Calu3 (cell line): ENCODE measurements at regions of chr1 and their contacts with region 1.

Region 1: DNA sequence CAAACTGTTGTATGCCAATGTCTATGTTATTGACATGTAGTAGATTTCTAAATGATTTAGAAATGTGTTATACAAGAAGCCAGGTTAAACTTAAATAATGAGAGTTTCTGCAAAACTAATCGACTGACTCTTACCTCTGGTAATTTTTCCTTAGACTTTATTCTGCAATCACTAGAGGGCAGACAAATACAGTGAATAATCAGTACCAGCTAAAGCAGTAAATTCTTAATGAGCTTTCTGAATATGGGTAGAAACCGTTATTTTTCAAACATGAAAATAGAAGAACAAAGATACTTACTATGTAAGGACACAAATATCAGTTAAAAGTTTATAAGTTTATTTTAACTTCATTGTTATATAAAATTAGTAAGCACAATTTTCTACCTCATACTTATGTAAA is 97.9 kb upstream of the RGS1 start:
- DNase-seq: no peak
- H3K4me3 Mint-ChIP-seq: no peak overlapping the region
- H3K27ac Mint-ChIP-seq: no peak overlapping the region
- H3K4me1 Mint-ChIP-seq: peaks cover 8% of the 10 kb centered on the region
- H3K27me3 Mint-ChIP-seq: no peaks in the 10 kb centered on the region
- CTCF ChIP-seq: peak; percentile 20

Region 2: GRCh38 chr1:192580351-192580962 is 102.8 kb after region 1 on chr1:
- CTCF ChIA-PET with region 1: interaction called, 5 read pairs
- intact Hi-C with region 1: loop called (anchors 1 kb)
- DNase-seq: peak; percentile 42
- H3K4me3 Mint-ChIP-seq: no peak overlapping the region
- H3K27ac Mint-ChIP-seq: no peak overlapping the region
- H3K4me1 Mint-ChIP-seq: no peaks in the 10 kb centered on the region
- H3K27me3 Mint-ChIP-seq: no peaks in the 10 kb centered on the region
- CTCF ChIP-seq: no peak

Region 3: DNA sequence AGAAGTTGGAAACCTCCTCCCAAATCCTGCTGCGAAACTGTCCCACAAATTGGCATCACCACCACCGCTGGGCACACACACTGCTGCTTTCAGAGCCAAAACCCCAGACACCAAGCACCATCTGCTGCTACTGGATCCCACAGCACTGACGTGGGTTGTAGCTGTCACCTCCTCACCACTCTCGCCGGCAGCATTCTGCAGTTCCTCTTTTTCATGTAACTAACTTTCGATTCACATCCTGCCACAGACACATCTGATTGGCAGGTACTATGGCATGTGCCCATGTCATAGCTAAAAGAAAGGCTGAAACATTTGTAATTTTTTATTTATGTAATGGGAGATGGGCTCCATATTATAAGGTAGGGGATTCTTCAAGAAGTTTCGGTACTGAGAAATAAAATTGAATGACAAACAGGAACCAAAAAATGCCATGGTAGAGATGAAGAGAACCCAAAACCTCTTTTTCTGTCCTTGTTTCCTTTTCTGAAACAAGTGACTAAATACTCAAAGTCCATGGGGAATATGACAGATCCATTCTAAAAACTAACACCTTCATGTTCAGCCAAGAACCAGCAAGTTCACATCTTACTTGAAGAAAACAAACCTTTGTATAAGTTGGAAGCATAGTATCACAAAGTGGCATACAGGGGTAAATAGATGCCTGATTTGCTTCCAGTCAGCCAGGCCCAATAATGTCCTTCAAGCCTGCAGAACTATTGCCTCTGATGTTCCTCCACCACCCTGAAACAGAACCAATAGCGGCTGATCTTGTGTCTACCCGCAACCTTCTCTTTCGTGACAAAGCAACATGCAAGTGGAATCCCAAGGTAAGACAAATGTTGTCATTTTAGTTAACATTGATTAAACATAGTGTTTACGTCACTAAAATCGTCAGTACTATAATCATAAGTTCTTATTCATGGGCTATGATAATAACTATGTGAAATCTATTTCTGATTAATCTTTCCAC is 131.8 kb after region 1 on chr1:
- CTCF ChIA-PET with region 1: interaction called, 7 read pairs
- intact Hi-C with region 1: loop called (anchors 1 kb)
- DNase-seq: no peak
- H3K4me3 Mint-ChIP-seq: no peak overlapping the region
- H3K27ac Mint-ChIP-seq: no peak overlapping the region
- H3K4me1 Mint-ChIP-seq: peaks cover 9% of the 10 kb centered on the region
- H3K27me3 Mint-ChIP-seq: no peaks in the 10 kb centered on the region
- CTCF ChIP-seq: no peak

Region 4: DNA sequence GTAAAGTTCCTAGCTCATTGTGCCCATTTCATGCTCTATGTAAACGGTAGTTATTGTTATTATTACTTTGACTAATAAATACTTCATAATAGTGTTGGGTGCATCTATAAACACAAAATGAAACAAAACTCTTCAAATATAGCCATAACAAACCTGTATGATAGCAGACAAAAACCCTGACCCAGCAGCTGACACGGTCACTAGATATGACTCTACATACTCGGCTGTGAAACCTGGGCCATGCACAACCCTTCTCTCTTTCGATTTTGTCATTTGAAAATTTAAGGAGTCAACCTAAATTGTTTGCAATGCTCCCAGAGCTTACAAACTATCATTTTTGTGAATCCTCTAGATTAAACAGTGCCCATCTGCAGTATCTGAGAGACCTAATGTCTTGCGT is 150.3 kb after region 1 on chr1:
- CTCF ChIA-PET with region 1: no interaction called
- intact Hi-C with region 1: no loop called
- DNase-seq: no peak
- H3K4me3 Mint-ChIP-seq: no peak overlapping the region
- H3K27ac Mint-ChIP-seq: no peak overlapping the region
- H3K4me1 Mint-ChIP-seq: peaks cover 40% of the 10 kb centered on the region
- H3K27me3 Mint-ChIP-seq: no peaks in the 10 kb centered on the region
- CTCF ChIP-seq: no peak

Region 5: DNA sequence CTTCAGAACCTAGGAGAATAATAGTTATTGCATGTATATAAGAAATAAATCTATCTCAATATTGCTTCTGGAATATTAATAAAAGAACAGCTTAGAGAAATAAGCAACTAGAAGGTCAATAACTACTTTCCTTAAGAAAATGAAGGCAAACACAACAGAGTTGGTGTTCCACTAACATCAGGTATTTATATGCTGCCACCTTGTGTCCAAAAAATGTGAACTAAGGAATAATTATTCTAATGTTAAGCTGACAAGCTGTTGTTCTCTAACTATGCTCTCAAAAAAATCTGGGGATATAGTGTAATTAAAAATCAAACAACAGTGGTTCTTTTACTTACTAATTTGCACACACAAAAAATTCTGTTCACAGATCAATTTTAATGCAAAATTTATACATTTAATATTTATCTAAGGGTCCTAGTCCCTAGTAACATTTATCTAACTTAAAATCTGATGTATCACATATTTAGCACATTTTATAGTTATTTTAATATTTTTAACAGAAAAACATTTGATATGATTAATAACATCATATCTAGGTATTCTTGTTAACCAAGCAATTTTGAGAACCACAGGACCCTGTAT is 541.9 kb after region 1 on chr1:
- CTCF ChIA-PET with region 1: interaction called, 12 read pairs
- intact Hi-C with region 1: loop called (anchors 1 kb)
- DNase-seq: peak; percentile 27
- H3K4me3 Mint-ChIP-seq: no peak overlapping the region
- H3K27ac Mint-ChIP-seq: no peak overlapping the region
- H3K4me1 Mint-ChIP-seq: no peaks in the 10 kb centered on the region
- H3K27me3 Mint-ChIP-seq: no peaks in the 10 kb centered on the region
- CTCF ChIP-seq: peak; percentile 58

Region 6: GRCh38 chr1:193121616-193122593 is 644.3 kb after region 1 on chr1 and contains the start of gene CDC73:
- CTCF ChIA-PET with region 1: interaction called, 3 read pairs
- intact Hi-C with region 1: loop called (anchors 5 kb)
- DNase-seq: peak; percentile 100
- H3K4me3 Mint-ChIP-seq: peak within 1 kb of the TSS; percentile 80
- H3K27ac Mint-ChIP-seq: peak within 1 kb of the TSS; percentile 84
- H3K4me1 Mint-ChIP-seq: peaks cover 25% of the 10 kb centered on the region
- H3K27me3 Mint-ChIP-seq: no peaks in the 10 kb centered on the region
- CTCF ChIP-seq: peak; percentile 94
- total RNA-seq, gene CDC73: 70.7 and 75.2 TPM in 2 replicates